ENCODE measurements at regions of chr17 and their contacts with region 1.

Region 1: GRCh38 chr17:38674749-38675615 is at the start of gene EPOP:
- DNase-seq: peak; percentile 55 to 62
- ATAC-seq: peak; percentile 55 to 73
- H3K4me3 ChIP-seq: peak within 1 kb of the TSS; percentile 56 to 71 (median 66)
- H3K27ac ChIP-seq: no peak within 1 kb of the TSS
- H3K4me1 ChIP-seq: peaks cover 0 to 4% of the 10 kb centered on the region in 2 donors
- H3K27me3 ChIP-seq: peaks cover 37 to 57% (median 55%) of the 10 kb centered on the region in 3 donors
- CTCF ChIP-seq: no peak
- POLR2A ChIP-seq: peak; percentile 63
- total RNA-seq, gene EPOP: 0.29 to 1.2 (median 0.75) TPM in 3 of 4 donors, not detected in the other

Region 2: DNA sequence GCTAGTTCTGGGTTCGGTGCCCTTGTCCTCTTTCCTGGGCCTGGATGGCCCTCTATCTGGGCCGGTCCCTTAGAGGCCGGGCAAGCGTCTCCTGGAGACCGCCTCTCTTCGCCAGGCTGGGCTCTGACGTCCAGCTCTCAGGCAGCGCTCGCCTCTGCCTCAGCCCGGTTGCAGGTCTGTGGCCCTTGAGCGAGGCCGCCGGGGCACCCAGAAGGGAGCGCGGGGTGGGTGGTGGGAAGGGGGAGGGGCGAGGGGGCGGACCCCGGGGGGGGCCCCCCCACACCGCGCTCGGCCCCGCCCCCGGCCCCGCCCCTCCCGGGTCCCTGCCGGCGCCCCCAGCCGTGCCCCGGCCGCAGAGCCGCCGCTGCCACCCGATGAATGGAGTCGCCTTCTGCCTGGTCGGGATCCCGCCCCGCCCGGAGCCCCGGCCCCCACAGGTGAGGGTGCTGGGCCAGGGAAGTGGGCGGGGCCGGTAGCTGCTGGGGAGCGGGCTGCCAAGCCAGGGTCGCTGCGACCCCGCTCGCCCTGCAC is 246.8 kb before region 1 on chr17 and contains the start of gene ARHGAP23:
- in situ Hi-C with region 1: no loop called
- intact Hi-C with region 1: loop called (anchors 10 kb)
- DNase-seq: peak in 1 of 2 donors; percentile 42
- ATAC-seq: peak; percentile 54 to 55
- H3K4me3 ChIP-seq: peak within 1 kb of the TSS; percentile 78 to 99 (median 87)
- H3K27ac ChIP-seq: peak within 1 kb of the TSS; percentile 89 to 94 (median 90)
- H3K4me1 ChIP-seq: peaks cover 35 to 45% of the 10 kb centered on the region in 2 donors
- H3K27me3 ChIP-seq: no peaks in the 10 kb centered on the region
- CTCF ChIP-seq: no peak
- POLR2A ChIP-seq: peak; percentile 34
- total RNA-seq, gene ARHGAP23: 8.0 to 22.7 (median 12.1) TPM

Region 3: DNA sequence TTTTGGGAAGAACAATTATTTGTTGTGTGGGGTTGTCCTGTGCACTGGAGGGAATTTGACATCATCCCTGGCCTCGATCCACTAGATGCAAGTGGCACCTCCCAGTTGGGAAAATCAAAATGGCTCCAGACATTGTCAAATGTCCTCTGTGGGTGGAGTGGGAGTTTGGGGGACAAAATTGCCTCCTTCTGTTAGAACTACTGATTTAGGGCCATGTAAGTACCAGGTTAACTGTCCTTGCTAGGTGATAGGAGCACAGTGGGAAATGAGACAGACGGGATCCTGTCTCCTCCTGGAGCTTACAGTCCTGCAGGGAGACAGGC is 189.9 kb before region 1 on chr17:
- in situ Hi-C with region 1: loop called in 1 of 4 experiments (anchors 25 kb)
- intact Hi-C with region 1: no loop called
- DNase-seq: no peak
- ATAC-seq: no peak
- H3K4me3 ChIP-seq: no peak overlapping the region
- H3K27ac ChIP-seq: no peak overlapping the region
- H3K4me1 ChIP-seq: peaks cover 0 to 8% of the 10 kb centered on the region in 2 donors
- H3K27me3 ChIP-seq: no peaks in the 10 kb centered on the region
- CTCF ChIP-seq: peak in 1 of 5 experiments; percentile 22
- POLR2A ChIP-seq: no peak

Region 4: GRCh38 chr17:38595892-38596291 is 79.1 kb before region 1 on chr17:
- in situ Hi-C with region 1: no loop called
- intact Hi-C with region 1: no loop called
- DNase-seq: no peak
- ATAC-seq: no peak
- H3K4me3 ChIP-seq: no peak overlapping the region
- H3K27ac ChIP-seq: no peak overlapping the region
- H3K4me1 ChIP-seq: no peaks in the 10 kb centered on the region
- H3K27me3 ChIP-seq: peaks cover 28 to 53% (median 29%) of the 10 kb centered on the region in 3 donors
- CTCF ChIP-seq: no peak
- POLR2A ChIP-seq: no peak

Region 5: GRCh38 chr17:38605888-38606645 is 68.9 kb before region 1 on chr17 and contains the start of gene SRCIN1:
- in situ Hi-C with region 1: no loop called
- intact Hi-C with region 1: no loop called
- DNase-seq: no peak
- ATAC-seq: peak; percentile 31 to 47
- H3K4me3 ChIP-seq: peak within 1 kb of the TSS; percentile 53 to 63 (median 57)
- H3K27ac ChIP-seq: no peak within 1 kb of the TSS
- H3K4me1 ChIP-seq: peaks cover 0 to 10% of the 10 kb centered on the region in 2 donors
- H3K27me3 ChIP-seq: peaks cover 47 to 63% (median 54%) of the 10 kb centered on the region in 3 donors
- CTCF ChIP-seq: peak; percentile 30 to 82 (median 49)
- POLR2A ChIP-seq: no peak
- total RNA-seq, gene SRCIN1: 0.24 TPM in 1 of 4 donors, not detected in the others

Region 6: GRCh38 chr17:38702166-38702899 is 27.4 kb after region 1 on chr17:
- in situ Hi-C with region 1: no loop called
- intact Hi-C with region 1: loop called (anchors 2 kb)
- DNase-seq: peak; percentile 82 to 88
- ATAC-seq: peak; percentile 47 to 50
- H3K4me3 ChIP-seq: peak overlapping the region; percentile 71 to 93 (median 78)
- H3K27ac ChIP-seq: peak overlapping the region; percentile 96 to 100 (median 98)
- H3K4me1 ChIP-seq: peaks cover 20 to 25% of the 10 kb centered on the region in 2 donors
- H3K27me3 ChIP-seq: no peaks in the 10 kb centered on the region
- CTCF ChIP-seq: no peak
- POLR2A ChIP-seq: peak; percentile 96 to 97

Region 7: DNA sequence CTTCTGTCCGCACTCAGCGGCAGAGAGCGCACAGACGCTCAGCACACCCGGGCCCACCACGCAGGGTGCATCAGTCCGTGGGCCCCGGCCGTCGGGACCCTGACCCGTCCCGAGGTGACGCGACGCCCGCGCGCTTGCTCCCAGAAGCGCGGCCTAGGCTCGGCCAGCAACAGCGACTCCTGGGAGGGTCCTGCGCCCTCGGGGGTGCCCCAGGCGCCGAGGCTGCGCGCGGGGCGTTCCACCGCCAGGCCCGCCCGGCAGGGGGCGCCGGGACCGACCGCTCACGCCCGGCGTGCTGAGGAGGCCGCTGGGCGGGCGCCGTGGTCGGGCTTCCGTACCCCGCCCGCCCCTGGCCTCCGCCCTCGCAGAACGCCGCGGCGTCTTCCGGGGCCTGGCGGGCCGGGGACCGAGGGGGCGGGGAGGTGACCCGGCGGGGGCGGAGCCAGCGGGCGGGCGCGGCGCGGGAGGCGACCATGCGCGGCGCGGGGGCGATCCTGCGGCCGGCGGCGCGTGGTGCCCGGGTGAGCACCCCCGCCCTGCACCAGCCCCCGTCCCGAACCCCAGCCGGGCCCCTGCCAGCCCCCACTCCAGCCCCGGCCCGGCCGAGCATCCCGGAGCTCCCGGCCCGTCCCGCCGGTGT is 55.0 kb after region 1 on chr17 and contains the start of gene CISD3:
- in situ Hi-C with region 1: loop called (anchors 5 kb)
- intact Hi-C with region 1: loop called (anchors 1 kb)
- DNase-seq: peak; percentile 70 to 79
- ATAC-seq: peak; percentile 81 to 86
- H3K4me3 ChIP-seq: peak within 1 kb of the TSS; percentile 79 to 96 (median 87)
- H3K27ac ChIP-seq: peak within 1 kb of the TSS; percentile 88 to 95 (median 90)
- H3K4me1 ChIP-seq: peaks cover 20 to 22% of the 10 kb centered on the region in 2 donors
- H3K27me3 ChIP-seq: no peaks in the 10 kb centered on the region
- CTCF ChIP-seq: peak in 4 of 5 experiments; percentile 91 to 98 (median 96)
- POLR2A ChIP-seq: peak; percentile 55 to 68
- total RNA-seq, gene CISD3: 10.0 to 25.8 (median 13.3) TPM

Region 8: GRCh38 chr17:38735161-38735997 is 60.4 kb after region 1 on chr17:
- in situ Hi-C with region 1: loop called (anchors 5 kb)
- intact Hi-C with region 1: loop called (anchors 1 kb)
- DNase-seq: no peak
- ATAC-seq: no peak
- H3K4me3 ChIP-seq: no peak overlapping the region
- H3K27ac ChIP-seq: peak overlapping the region in 1 of 4 donors; percentile 18
- H3K4me1 ChIP-seq: peaks cover 25 to 28% of the 10 kb centered on the region in 2 donors
- H3K27me3 ChIP-seq: no peaks in the 10 kb centered on the region
- CTCF ChIP-seq: peak; percentile 80 to 98 (median 97)
- POLR2A ChIP-seq: no peak

Region 9: GRCh38 chr17:38752119-38752929 is 77.3 kb after region 1 on chr17 and contains the start of gene PSMB3:
- in situ Hi-C with region 1: no loop called
- intact Hi-C with region 1: loop called (anchors 5 kb)
- DNase-seq: peak; percentile 98 to 99
- ATAC-seq: peak; percentile 97 to 98
- H3K4me3 ChIP-seq: peak within 1 kb of the TSS; percentile 75 to 97 (median 90)
- H3K27ac ChIP-seq: peak within 1 kb of the TSS; percentile 92 to 96 (median 94)
- H3K4me1 ChIP-seq: peaks cover 27 to 41% of the 10 kb centered on the region in 2 donors
- H3K27me3 ChIP-seq: peaks cover 24 to 33% (median 29%) of the 10 kb centered on the region in 3 donors
- CTCF ChIP-seq: no peak
- POLR2A ChIP-seq: peak; percentile 53 to 85
- total RNA-seq, gene PSMB3: 211 to 334 (median 280) TPM

Region 10: GRCh38 chr17:39199820-39200069 is 524.8 kb after region 1 on chr17:
- in situ Hi-C with region 1: no loop called
- intact Hi-C with region 1: no loop called
- DNase-seq: peak; percentile 92
- ATAC-seq: peak; percentile 69 to 82
- H3K4me3 ChIP-seq: peak overlapping the region; percentile 79 to 94 (median 84)
- H3K27ac ChIP-seq: peak overlapping the region; percentile 87 to 99 (median 94)
- H3K4me1 ChIP-seq: peaks cover 44 to 45% of the 10 kb centered on the region in 2 donors
- H3K27me3 ChIP-seq: no peaks in the 10 kb centered on the region
- CTCF ChIP-seq: no peak
- POLR2A ChIP-seq: peak in 1 of 2 donors; percentile 82